Activated CD8-positive, alpha-beta T cell treated with anti-CD3 and anti-CD28 coated beads, Interleukin-2, amount 10 ng/mL, durations not matched to agents 7 days and 5 days (primary cell): ENCODE measurements at regions of chr12 and their contacts with region 1.

Region 1: GRCh38 chr12:46372544-46373110 is at the start of gene SLC38A2:
- DNase-seq: peak; percentile 97
- ATAC-seq: peak; percentile 84
- H3K4me3 Mint-ChIP-seq: peak within 1 kb of the TSS; percentile 89
- H3K27ac Mint-ChIP-seq: peak within 1 kb of the TSS; percentile 96
- H3K4me1 Mint-ChIP-seq: peaks cover 48% of the 10 kb centered on the region
- H3K27me3 Mint-ChIP-seq: peaks cover 2% of the 10 kb centered on the region
- total RNA-seq, gene SLC38A2: 194 to 200 TPM

Region 2: DNA sequence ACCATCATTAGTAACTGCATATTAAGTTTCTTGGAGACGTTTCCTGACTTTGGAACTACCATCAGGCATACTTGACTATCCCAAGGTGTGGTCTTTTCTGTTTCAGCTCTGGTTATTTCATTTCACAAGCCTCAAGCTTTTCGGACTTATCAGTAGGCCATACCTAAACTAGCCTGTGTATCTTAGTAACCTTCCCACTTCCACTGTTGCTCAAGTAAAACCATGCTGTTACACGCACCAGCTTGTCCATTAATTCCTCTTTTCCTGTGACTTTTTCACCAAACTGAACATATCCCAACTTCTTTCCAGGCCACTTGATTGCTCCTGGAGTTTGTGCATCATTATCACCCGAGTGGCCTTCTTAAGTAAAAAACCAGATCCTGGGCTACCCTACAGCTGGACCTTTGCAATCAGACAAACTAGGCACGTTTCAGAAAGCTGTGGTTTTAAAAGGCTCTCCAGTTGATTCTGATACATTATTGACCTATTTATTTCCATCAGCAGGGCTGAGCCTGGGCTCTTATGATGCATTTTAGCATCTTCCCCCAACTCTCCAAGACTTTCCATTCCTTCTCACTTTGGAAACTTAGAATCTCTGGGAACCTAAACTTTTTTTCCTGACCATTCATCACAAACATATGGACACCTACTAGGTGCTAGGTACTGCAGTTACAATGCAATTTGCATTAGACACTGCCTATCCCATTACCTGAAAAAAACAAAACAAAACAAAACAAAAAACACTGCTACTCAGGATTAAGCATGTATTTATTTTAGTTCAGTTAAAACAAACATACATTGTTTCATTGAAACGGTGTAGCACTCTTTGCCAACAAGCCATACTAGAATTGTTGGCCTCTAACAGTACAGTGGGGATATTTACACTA is 14.9 kb before region 1 on chr12:
- CTCF ChIA-PET with region 1: interaction called, 6 read pairs
- POLR2A ChIA-PET with region 1: interaction called, 13 read pairs
- DNase-seq: no peak
- ATAC-seq: no peak
- H3K4me3 Mint-ChIP-seq: no peak overlapping the region
- H3K27ac Mint-ChIP-seq: no peak overlapping the region
- H3K4me1 Mint-ChIP-seq: peaks cover 29% of the 10 kb centered on the region
- H3K27me3 Mint-ChIP-seq: no peaks in the 10 kb centered on the region

Region 3: GRCh38 chr12:46382964-46383653 is 10.5 kb after region 1 on chr12:
- CTCF ChIA-PET with region 1: interaction called, 4 read pairs
- POLR2A ChIA-PET with region 1: interaction called, 20 read pairs
- DNase-seq: peak; percentile 96
- ATAC-seq: peak; percentile 87
- H3K4me3 Mint-ChIP-seq: peak overlapping the region; percentile 85
- H3K27ac Mint-ChIP-seq: peak overlapping the region; percentile 95
- H3K4me1 Mint-ChIP-seq: peaks cover 44% of the 10 kb centered on the region
- H3K27me3 Mint-ChIP-seq: no peaks in the 10 kb centered on the region

Region 4: DNA sequence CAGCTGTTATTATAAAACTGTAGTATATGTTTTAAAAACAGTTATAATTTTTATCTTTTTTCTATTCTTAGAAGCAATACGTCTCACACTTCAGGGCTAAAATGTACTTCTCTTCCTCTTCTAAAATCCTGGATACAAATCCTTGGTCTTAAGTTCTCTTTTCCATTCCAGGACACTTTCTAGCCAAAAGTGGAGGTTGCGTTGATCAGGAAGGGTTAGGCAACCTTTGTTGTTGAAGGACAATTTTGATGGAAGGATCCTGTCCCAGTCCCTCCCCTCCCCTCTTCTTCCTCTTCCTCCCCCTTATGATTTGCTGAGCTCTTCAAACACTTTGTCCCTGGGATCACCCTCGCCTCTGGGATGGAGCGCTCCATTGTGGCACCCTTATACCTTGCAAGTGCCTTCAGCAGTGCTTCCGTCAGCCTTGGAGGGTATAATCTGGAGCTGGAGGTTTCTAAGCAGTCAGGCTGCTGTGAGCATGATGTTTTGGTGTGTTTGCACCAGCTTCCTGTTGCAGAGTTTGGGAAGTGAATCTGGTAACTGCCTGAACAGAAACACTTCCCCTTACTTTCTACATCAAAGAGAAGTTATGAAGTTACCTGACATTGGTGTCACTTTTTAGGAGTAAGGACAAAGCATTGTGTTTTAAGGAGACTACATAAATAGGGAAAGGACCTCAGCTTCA is 87.4 kb after region 1 on chr12:
- CTCF ChIA-PET with region 1: interaction called, 5 read pairs
- POLR2A ChIA-PET with region 1: interaction called, 18 read pairs
- DNase-seq: peak; percentile 40
- ATAC-seq: peak; percentile 45
- H3K4me3 Mint-ChIP-seq: peak overlapping the region; percentile 53
- H3K27ac Mint-ChIP-seq: peak overlapping the region; percentile 92
- H3K4me1 Mint-ChIP-seq: peaks cover 62% of the 10 kb centered on the region
- H3K27me3 Mint-ChIP-seq: no peaks in the 10 kb centered on the region

Region 5: GRCh38 chr12:46523863-46524770 is 151.5 kb after region 1 on chr12:
- CTCF ChIA-PET with region 1: interaction called, 4 read pairs
- POLR2A ChIA-PET with region 1: interaction called, 18 read pairs
- DNase-seq: peak; percentile 64
- ATAC-seq: peak; percentile 92
- H3K4me3 Mint-ChIP-seq: peak overlapping the region; percentile 69
- H3K27ac Mint-ChIP-seq: peak overlapping the region; percentile 95
- H3K4me1 Mint-ChIP-seq: peaks cover 53% of the 10 kb centered on the region
- H3K27me3 Mint-ChIP-seq: no peaks in the 10 kb centered on the region